ENCODE measurements at regions of chr9 and their contacts with region 1.

Region 1: GRCh38 chr9:37485389-37486219 is at the start of gene POLR1E:
- DNase-seq: peak; percentile 98
- ATAC-seq: peak; percentile 96 to 99 (median 97)
- H3K4me3 ChIP-seq: peak within 1 kb of the TSS; percentile 92
- H3K4me3 Mint-ChIP-seq: peak within 1 kb of the TSS; percentile 88
- H3K27ac ChIP-seq: peak within 1 kb of the TSS; percentile 71
- H3K27ac Mint-ChIP-seq: peak within 1 kb of the TSS; percentile 88 to 96
- H3K4me1 ChIP-seq: peaks cover 22% of the 10 kb centered on the region
- H3K4me1 Mint-ChIP-seq: peaks cover 28 to 35% of the 10 kb centered on the region in 2 donors
- H3K27me3 ChIP-seq: no peaks in the 10 kb centered on the region
- H3K27me3 Mint-ChIP-seq: peaks cover 6 to 8% of the 10 kb centered on the region in 2 donors
- CTCF ChIP-seq: no peak
- total RNA-seq, gene POLR1E: 17.4 to 23.8 (median 17.8) TPM

Region 2: DNA sequence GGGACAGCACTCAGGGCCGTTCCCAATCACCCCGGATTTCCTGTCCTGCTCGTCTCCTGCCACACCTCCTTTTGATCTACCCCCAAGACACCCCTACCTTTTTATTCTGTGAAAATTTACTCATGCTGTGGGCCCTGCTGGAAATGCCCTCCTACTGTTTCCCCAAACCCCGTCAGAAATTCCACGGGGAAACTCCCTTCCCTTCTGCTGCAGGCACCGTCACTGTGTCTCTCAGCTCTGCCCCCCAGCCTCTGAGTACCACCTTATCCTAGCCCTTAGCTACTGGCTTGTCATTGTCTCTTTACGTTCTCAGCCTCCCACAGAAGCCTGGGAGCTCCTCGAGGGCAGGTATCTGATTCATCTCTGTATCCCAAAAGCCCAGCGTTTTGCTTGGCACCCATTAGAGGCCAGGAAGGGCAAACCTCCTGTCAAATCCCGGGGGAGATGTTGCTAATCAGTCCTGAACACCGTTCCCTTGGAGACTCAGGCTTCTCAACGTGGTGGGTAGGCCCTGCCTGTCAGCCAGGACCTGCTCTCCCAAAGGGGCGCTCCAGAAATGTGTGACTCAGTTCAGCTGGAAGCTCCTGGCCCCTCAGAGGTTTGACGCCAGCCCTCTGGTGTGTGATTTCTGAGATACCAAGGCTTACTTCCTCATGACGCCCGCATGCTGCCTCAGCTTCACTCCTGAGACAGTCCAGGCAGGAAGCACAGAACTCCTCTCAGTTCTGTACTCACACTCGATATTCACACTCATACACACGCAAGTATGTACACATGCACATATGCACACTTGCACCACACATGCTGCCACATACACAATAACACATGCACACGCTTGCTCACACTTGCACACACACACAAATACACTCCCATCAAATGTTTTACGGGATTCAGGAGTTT is 113.8 kb before region 1 on chr9:
- intact Hi-C with region 1: no loop called
- DNase-seq: no peak
- ATAC-seq: no peak
- H3K4me3 ChIP-seq: no peak overlapping the region
- H3K4me3 Mint-ChIP-seq: no peak overlapping the region
- H3K27ac ChIP-seq: peak overlapping the region; percentile 78
- H3K27ac Mint-ChIP-seq: no peak overlapping the region
- H3K4me1 ChIP-seq: peaks cover 27% of the 10 kb centered on the region
- H3K4me1 Mint-ChIP-seq: no peaks in the 10 kb centered on the region
- H3K27me3 ChIP-seq: no peaks in the 10 kb centered on the region
- H3K27me3 Mint-ChIP-seq: peaks cover 5 to 7% of the 10 kb centered on the region in 2 donors
- CTCF ChIP-seq: no peak

Region 3: DNA sequence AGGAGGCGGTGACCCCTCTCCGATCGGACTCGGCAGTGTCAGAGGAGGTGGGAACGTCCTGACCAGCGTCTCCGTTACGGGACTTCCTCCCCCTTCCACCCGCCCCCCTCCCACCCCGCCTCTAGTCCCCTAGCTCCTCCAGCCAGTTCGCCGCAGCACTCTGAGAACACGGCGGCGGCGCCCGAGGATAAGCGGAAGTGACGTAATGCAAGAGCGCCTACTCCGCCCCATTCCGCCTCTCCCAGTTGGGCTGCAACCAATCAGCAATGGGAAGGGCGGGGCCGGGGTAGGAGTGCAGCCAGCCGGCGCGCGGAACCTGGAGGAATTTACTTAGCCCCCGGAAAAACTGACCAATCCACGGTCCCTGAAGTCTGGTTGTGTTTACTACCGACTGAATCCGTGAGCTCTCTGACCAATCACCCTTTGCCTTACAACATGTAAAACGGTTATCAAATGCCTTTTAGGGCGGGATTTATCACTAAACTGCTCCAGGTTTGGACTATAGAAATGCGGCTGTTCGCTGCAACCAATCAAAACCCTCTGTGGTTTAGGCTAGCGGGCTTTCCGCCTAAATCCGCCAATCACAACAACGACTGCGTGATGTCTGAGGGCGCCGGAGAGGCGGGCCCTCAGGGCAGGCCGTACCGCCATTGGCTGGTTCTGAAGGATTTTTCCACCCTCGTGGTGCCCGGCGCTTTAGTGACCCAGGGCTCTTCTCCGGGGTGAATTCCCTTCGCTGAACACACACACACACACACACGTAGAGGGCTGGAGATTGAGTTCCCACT is 20.2 kb before region 1 on chr9 and contains the start of gene ZBTB5:
- intact Hi-C with region 1: loop called (anchors 1 kb)
- DNase-seq: peak; percentile 99
- ATAC-seq: peak; percentile 77 to 90 (median 80)
- H3K4me3 ChIP-seq: peak within 1 kb of the TSS; percentile 94
- H3K4me3 Mint-ChIP-seq: peak within 1 kb of the TSS; percentile 92
- H3K27ac ChIP-seq: peak within 1 kb of the TSS; percentile 98
- H3K27ac Mint-ChIP-seq: peak within 1 kb of the TSS; percentile 94 to 96
- H3K4me1 ChIP-seq: peaks cover 15% of the 10 kb centered on the region
- H3K4me1 Mint-ChIP-seq: peaks cover 26 to 44% of the 10 kb centered on the region in 2 donors
- H3K27me3 ChIP-seq: no peaks in the 10 kb centered on the region
- H3K27me3 Mint-ChIP-seq: no peaks in the 10 kb centered on the region
- CTCF ChIP-seq: no peak
- total RNA-seq, gene ZBTB5: 12.6 to 14.2 (median 13.3) TPM

Region 4: GRCh38 chr9:37592108-37592951 is 106.7 kb after region 1 on chr9 and contains the start of gene TOMM5:
- intact Hi-C with region 1: loop called (anchors 2 kb)
- DNase-seq: peak; percentile 83 to 95
- ATAC-seq: peak; percentile 97 to 98 (median 98)
- H3K4me3 ChIP-seq: peak within 1 kb of the TSS; percentile 85
- H3K4me3 Mint-ChIP-seq: peak within 1 kb of the TSS; percentile 99
- H3K27ac ChIP-seq: peak within 1 kb of the TSS; percentile 61
- H3K27ac Mint-ChIP-seq: peak within 1 kb of the TSS; percentile 93 to 94
- H3K4me1 ChIP-seq: peaks cover 30% of the 10 kb centered on the region
- H3K4me1 Mint-ChIP-seq: peaks cover 26 to 32% of the 10 kb centered on the region in 2 donors
- H3K27me3 ChIP-seq: peaks cover 5% of the 10 kb centered on the region
- H3K27me3 Mint-ChIP-seq: peaks cover 9 to 12% of the 10 kb centered on the region in 2 donors
- CTCF ChIP-seq: no peak
- total RNA-seq, gene TOMM5: 29.3 to 38.9 (median 36.7) TPM

Measured in natural killer cell (primary cell).